Activated T-helper 1 cell treated with anti-CD3 and anti-CD28 coated beads, Interleukin-12 subunit alpha, Interleukin-12 subunit beta, Interleukin-2, Interleukin-4 antibody, amounts not matched to agents 30 ng/mL and 10 ng/mL and 1 ng/mL, durations not matched to agents 14 hours and 24 hours and 36 hours (primary cell): ENCODE measurements at regions of chr7 and their contacts with region 1.

Region 1: DNA sequence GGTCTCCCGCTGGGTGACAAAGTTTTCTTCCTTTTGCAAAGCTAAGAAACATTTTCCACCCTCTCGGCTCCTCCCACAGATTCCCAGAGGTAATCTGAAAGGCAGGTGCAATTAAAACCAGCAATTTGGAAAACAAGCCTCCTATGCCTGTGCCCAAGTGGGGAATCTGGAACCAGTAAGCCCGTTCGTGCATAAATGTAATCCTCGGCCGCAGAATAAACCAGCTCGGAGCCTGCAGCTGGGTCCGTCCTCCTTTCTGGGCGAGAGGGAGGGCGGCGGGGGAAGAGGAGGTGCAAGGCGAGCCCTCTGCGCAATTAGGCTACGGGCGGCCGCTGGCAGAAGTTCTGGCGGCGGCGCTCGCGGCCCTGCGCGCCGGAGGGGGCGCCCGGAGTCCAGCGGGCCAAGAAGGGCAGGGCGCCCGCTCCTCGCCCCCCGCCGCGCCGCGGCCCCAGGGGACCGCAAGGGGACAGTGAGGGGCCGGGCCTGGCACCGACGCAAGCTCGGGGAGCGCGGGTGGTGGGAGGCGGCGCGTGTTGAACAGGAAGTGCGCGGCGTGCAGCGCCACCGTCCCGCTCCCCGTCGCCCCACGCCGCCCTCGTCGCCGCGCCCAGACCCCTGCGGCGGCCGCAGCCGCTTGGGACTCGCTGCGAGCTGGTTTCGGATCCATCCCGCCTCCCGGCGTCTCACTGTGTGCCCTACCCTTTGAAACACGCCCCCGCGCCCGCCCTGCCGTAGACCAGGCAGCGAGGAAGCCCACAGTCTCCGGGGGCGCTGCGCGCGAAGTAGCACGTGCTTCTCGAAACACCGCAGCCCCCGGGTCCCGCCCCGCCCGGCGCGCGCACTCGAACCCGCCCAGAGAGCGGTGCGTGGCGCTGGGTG is at the start of gene PRKAG2:
- DNase-seq: peak; percentile 27
- H3K4me3 Mint-ChIP-seq: peak within 1 kb of the TSS; percentile 94
- H3K27ac Mint-ChIP-seq: peak within 1 kb of the TSS; percentile 71
- H3K4me1 Mint-ChIP-seq: peaks cover 6% of the 10 kb centered on the region
- H3K27me3 Mint-ChIP-seq: peaks cover 37% of the 10 kb centered on the region
- total RNA-seq, gene PRKAG2: 16.9 and 18.5 TPM in 2 replicates

Region 2: GRCh38 chr7:151782598-151783448 is 94.3 kb before region 1 on chr7:
- intact Hi-C with region 1: loop called (anchors 2 kb)
- DNase-seq: peak; percentile 41
- H3K4me3 Mint-ChIP-seq: peak overlapping the region; percentile 56
- H3K27ac Mint-ChIP-seq: peak overlapping the region; percentile 29
- H3K4me1 Mint-ChIP-seq: peaks cover 5% of the 10 kb centered on the region
- H3K27me3 Mint-ChIP-seq: peaks cover 8% of the 10 kb centered on the region

Region 3: GRCh38 chr7:151936207-151936606 is 59.1 kb after region 1 on chr7:
- intact Hi-C with region 1: loop called (anchors 1 kb)
- DNase-seq: no peak
- H3K4me3 Mint-ChIP-seq: peak overlapping the region; percentile 44
- H3K27ac Mint-ChIP-seq: peak overlapping the region; percentile 38
- H3K4me1 Mint-ChIP-seq: peaks cover 14% of the 10 kb centered on the region
- H3K27me3 Mint-ChIP-seq: peaks cover 42% of the 10 kb centered on the region

Region 4: GRCh38 chr7:152145853-152146466 is 268.8 kb after region 1 on chr7:
- intact Hi-C with region 1: loop called (anchors 5 kb)
- DNase-seq: no peak
- H3K4me3 Mint-ChIP-seq: no peak overlapping the region
- H3K27ac Mint-ChIP-seq: peak overlapping the region; percentile 80
- H3K4me1 Mint-ChIP-seq: peaks cover 40% of the 10 kb centered on the region
- H3K27me3 Mint-ChIP-seq: no peaks in the 10 kb centered on the region

Region 5: GRCh38 chr7:152363798-152364197 is 486.7 kb after region 1 on chr7:
- intact Hi-C with region 1: no loop called
- DNase-seq: no peak
- H3K4me3 Mint-ChIP-seq: no peak overlapping the region
- H3K27ac Mint-ChIP-seq: no peak overlapping the region
- H3K4me1 Mint-ChIP-seq: peaks cover 18% of the 10 kb centered on the region
- H3K27me3 Mint-ChIP-seq: no peaks in the 10 kb centered on the region